ENCODE measurements at regions of chr5 and their contacts with region 1.

Region 1: DNA sequence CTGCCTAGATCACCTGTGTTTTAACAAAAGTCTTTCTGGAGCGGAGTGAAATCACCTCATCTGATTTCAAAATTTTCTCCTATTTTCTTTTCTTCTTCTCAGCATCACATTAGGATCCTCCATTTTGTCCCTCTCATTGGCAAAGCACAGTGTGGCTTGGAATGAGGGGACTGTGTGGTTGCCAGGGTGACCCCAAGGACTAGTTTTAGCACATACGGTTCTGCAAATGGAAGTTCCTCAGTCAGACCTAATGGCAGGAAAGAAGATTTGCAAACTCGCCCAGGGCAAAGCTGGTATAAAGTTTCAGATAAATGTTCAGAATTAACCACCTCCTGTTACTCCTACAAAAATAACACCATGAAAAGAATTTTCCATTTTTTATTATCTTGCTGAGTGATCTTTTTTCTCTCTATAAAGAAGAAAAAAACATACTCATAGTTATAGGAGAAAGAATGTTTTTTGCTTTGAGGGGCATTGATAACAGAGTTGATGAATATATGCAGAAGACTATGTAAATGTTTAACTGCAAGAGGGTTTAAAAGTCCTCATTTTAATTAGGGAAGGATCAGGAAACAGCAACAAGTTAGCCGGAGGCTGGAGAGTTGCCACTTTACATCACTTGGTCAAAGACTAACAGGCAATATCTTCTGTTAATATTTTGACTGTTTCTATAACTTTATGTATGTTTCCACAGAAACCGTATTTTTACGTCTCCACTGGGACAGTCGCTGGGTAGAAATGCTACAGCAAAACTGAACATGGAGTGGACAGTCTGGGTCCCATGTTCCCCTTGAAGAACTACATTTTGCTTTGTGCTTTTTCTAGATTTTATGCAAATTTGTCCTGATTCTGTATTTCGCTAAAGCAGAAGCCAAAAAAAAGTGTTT is 257.8 kb downstream of the NR2F1-AS1 start:
- DNase-seq: no peak
- ATAC-seq: no peak
- H3K4me3 Mint-ChIP-seq: no peak overlapping the region
- H3K27ac Mint-ChIP-seq: no peak overlapping the region
- H3K4me1 Mint-ChIP-seq: no peaks in the 10 kb centered on the region
- H3K27me3 Mint-ChIP-seq: no peaks in the 10 kb centered on the region
- CTCF ChIP-seq: no peak

Region 2: DNA sequence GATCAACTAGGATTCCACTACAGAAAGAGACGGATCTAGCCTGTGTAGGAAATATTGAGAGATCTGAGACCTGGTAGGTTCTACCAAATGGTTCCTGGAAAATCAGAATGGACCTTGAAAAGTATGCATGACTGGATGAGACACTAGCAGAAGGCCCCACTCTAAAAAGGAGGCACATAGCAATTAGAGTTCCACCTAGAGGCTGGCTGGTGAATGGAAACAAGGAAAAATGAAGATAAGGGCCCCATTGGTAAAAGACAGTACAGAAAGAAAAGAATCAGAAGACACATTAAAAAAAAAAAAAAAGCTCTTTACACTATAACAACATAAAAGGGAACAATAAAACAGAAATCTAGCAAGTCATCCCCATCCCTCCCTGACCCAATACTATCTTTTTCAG is 260.7 kb before region 1 on chr5:
- CTCF ChIA-PET with region 1: no interaction called
- POLR2A ChIA-PET with region 1: no interaction called
- intact Hi-C with region 1: loop called (anchors 10 kb)
- DNase-seq: no peak
- ATAC-seq: no peak
- H3K4me3 Mint-ChIP-seq: no peak overlapping the region
- H3K27ac Mint-ChIP-seq: no peak overlapping the region
- H3K4me1 Mint-ChIP-seq: no peaks in the 10 kb centered on the region
- H3K27me3 Mint-ChIP-seq: no peaks in the 10 kb centered on the region
- CTCF ChIP-seq: no peak

Measured in activated B cell treated with CpG ODN at 0.5 μM for 24 hours (primary cell).